ENCODE measurements at regions of chr2 and their contacts with region 1.

Region 1: DNA sequence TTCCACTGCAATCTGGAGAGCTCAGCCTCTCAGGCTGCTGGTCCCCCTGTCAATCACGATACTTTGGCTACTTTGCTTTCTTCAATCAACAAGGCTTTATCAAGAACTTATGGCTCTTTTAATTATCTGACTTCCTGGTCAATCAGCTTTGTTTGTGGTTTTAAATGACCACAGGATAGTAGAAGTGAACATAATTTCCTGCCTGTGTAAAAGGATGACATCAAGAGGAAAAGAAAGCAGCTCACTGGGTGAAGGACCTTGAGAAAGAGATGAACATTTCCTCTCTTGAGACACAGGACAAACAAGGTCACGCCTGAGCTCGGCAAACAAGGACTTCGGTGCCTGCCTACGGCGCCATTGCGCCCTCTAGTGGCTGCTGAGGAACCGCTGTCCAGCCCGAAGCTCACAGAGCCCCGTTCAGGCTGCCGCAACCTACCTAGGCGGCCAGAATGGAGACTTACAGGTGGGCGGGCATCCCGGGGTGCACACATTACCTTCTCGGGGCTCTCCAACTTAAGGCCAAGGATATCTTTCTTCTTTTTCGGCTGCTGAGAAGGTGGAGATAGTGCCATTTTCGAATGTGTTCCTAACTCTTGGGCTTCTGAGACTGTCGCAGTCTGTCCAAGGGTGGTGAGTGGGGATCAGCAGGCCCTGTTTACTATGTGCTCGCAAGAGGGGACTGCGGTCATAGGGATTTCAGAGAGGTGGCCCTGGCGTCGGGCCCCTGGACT is 54.0 kb downstream of the IL1RL2 start:
- DNase-seq: peak; percentile 92
- H3K4me3 ChIP-seq: no peak overlapping the region
- CTCF ChIP-seq: peak; percentile 99

Region 2: GRCh38 chr2:101998896-101999789 is 241.7 kb before region 1 on chr2:
- CTCF ChIA-PET with region 1: interaction called, 145 read pairs
- POLR2A ChIA-PET with region 1: no interaction called
- DNase-seq: no peak
- H3K4me3 ChIP-seq: no peak overlapping the region
- CTCF ChIP-seq: no peak

Region 3: GRCh38 chr2:102033031-102033749 is 207.6 kb before region 1 on chr2:
- CTCF ChIA-PET with region 1: interaction called, 60 read pairs
- POLR2A ChIA-PET with region 1: no interaction called
- DNase-seq: no peak
- H3K4me3 ChIP-seq: no peak overlapping the region
- CTCF ChIP-seq: no peak

Region 4: GRCh38 chr2:102172745-102173144 is 68.1 kb before region 1 on chr2:
- CTCF ChIA-PET with region 1: interaction called, 14 read pairs
- POLR2A ChIA-PET with region 1: no interaction called
- DNase-seq: no peak
- H3K4me3 ChIP-seq: no peak overlapping the region
- CTCF ChIP-seq: no peak

Region 5: GRCh38 chr2:102258386-102259074 is 17.7 kb after region 1 on chr2:
- CTCF ChIA-PET with region 1: interaction called, 97 read pairs
- POLR2A ChIA-PET with region 1: interaction called, 3 read pairs
- DNase-seq: peak; percentile 93
- H3K4me3 ChIP-seq: no peak overlapping the region
- CTCF ChIP-seq: no peak

Region 6: GRCh38 chr2:102585847-102586431 is 345.1 kb after region 1 on chr2:
- CTCF ChIA-PET with region 1: no interaction called
- POLR2A ChIA-PET with region 1: no interaction called
- DNase-seq: no peak
- H3K4me3 ChIP-seq: no peak overlapping the region
- CTCF ChIP-seq: no peak